CD4-positive, alpha-beta memory T cell (primary cell): ENCODE measurements at regions of chr11 and their contacts with region 1.

Region 1: GRCh38 chr11:12224537-12224893 is 114.1 kb downstream of the MICAL2 start:
- DNase-seq: peak; percentile 88 to 94 (median 90)
- H3K4me3 ChIP-seq: peak overlapping the region; percentile 30 to 48
- H3K4me3 Mint-ChIP-seq: peak overlapping the region; percentile 73 to 87 (median 78)
- H3K27ac ChIP-seq: peak overlapping the region; percentile 60
- H3K27ac Mint-ChIP-seq: peak overlapping the region; percentile 93 to 99 (median 97)
- H3K4me1 ChIP-seq: peaks cover 49% of the 10 kb centered on the region
- H3K4me1 Mint-ChIP-seq: peaks cover 41 to 64% (median 52%) of the 10 kb centered on the region in 4 donors
- H3K27me3 ChIP-seq: no peaks in the 10 kb centered on the region
- H3K27me3 Mint-ChIP-seq: no peaks in the 10 kb centered on the region

Region 2: GRCh38 chr11:12043959-12044819 is 180.3 kb before region 1 on chr11:
- CTCF ChIA-PET with region 1: interaction called, 11 read pairs
- POLR2A ChIA-PET with region 1: interaction called, 6 read pairs
- intact Hi-C with region 1: no loop called
- DNase-seq: peak in 4 of 5 donors; percentile 49 to 60 (median 50)
- H3K4me3 ChIP-seq: no peak overlapping the region
- H3K4me3 Mint-ChIP-seq: no peak overlapping the region
- H3K27ac ChIP-seq: no peak overlapping the region
- H3K27ac Mint-ChIP-seq: no peak overlapping the region
- H3K4me1 ChIP-seq: no peaks in the 10 kb centered on the region
- H3K4me1 Mint-ChIP-seq: peaks cover 2 to 5% (median 3%) of the 10 kb centered on the region in 4 donors
- H3K27me3 ChIP-seq: no peaks in the 10 kb centered on the region
- H3K27me3 Mint-ChIP-seq: no peaks in the 10 kb centered on the region

Region 3: DNA sequence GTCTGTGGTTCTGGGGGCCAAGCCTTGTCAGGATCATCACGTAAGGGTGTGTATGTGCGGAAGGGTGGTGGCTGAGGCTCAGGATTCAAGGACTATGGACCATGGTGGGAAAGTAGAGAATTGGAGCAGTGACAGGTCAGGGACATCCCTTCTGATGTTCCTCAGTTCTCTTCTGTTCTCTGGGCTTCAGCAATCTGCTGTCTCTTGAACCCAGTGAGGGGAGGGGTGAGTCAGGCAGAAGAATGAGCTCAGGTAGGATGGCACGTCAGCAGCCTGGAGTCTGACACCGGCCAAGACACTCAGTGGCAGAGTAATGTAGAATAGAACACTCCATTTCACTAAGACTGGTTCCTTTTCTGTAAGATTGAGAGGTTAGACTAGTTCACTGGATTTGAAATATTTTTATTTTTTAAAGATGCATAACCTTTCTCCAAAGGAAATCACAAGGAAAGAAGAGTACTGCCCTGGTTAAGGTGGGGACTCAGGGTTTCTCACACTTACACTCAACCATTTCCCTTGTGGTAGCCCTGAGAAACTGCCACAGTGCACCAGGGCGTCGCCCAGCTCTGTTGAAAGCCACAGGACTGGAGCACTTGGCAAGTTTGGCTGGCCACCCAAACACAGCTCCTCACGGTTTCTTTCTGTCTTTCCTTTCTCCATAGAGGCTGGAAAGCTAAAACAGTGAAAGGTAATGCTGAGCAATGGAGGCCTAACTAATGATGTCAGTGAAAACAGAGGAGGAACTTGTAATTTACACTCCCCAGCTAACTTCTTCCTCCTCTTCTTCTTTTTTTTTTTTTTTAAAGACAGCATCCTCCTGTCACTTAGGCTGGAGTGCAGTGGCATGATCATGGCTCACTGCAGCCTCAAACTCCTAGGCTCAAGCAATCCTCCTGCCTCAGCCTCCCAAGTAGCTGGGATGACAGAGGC is 137.2 kb before region 1 on chr11:
- CTCF ChIA-PET with region 1: interaction called, 17 read pairs
- POLR2A ChIA-PET with region 1: interaction called, 14 read pairs
- intact Hi-C with region 1: no loop called
- DNase-seq: peak; percentile 39 to 63 (median 52)
- H3K4me3 ChIP-seq: peak overlapping the region; percentile 6 to 26
- H3K4me3 Mint-ChIP-seq: peak overlapping the region; percentile 53 to 81 (median 72)
- H3K27ac ChIP-seq: no peak overlapping the region
- H3K27ac Mint-ChIP-seq: peak overlapping the region; percentile 67 to 94 (median 90)
- H3K4me1 ChIP-seq: peaks cover 62% of the 10 kb centered on the region
- H3K4me1 Mint-ChIP-seq: peaks cover 59 to 83% (median 65%) of the 10 kb centered on the region in 4 donors
- H3K27me3 ChIP-seq: no peaks in the 10 kb centered on the region
- H3K27me3 Mint-ChIP-seq: no peaks in the 10 kb centered on the region

Region 4: GRCh38 chr11:12110201-12110713 is 114.3 kb before region 1 on chr11 and contains the start of gene MICAL2:
- CTCF ChIA-PET with region 1: interaction called, 3 read pairs
- POLR2A ChIA-PET with region 1: interaction called, 18 read pairs
- intact Hi-C with region 1: loop called (anchors 5 kb)
- DNase-seq: peak; percentile 82 to 86 (median 84)
- H3K4me3 ChIP-seq: peak within 1 kb of the TSS; percentile 60 to 61
- H3K4me3 Mint-ChIP-seq: peak within 1 kb of the TSS; percentile 82 to 90 (median 85)
- H3K27ac ChIP-seq: peak within 1 kb of the TSS; percentile 32
- H3K27ac Mint-ChIP-seq: peak within 1 kb of the TSS; percentile 63 to 92 (median 82)
- H3K4me1 ChIP-seq: peaks cover 43% of the 10 kb centered on the region
- H3K4me1 Mint-ChIP-seq: peaks cover 17 to 34% (median 23%) of the 10 kb centered on the region in 4 donors
- H3K27me3 ChIP-seq: no peaks in the 10 kb centered on the region
- H3K27me3 Mint-ChIP-seq: no peaks in the 10 kb centered on the region
- total RNA-seq, gene MICAL2: 33.3 to 38.8 TPM

Region 5: GRCh38 chr11:12134236-12134585 is 90.3 kb before region 1 on chr11:
- CTCF ChIA-PET with region 1: interaction called, 6 read pairs
- POLR2A ChIA-PET with region 1: interaction called, 11 read pairs
- intact Hi-C with region 1: no loop called
- DNase-seq: no peak
- H3K4me3 ChIP-seq: no peak overlapping the region
- H3K4me3 Mint-ChIP-seq: peak overlapping the region; percentile 29 to 84 (median 52)
- H3K27ac ChIP-seq: no peak overlapping the region
- H3K27ac Mint-ChIP-seq: peak overlapping the region; percentile 67 to 84 (median 75)
- H3K4me1 ChIP-seq: peaks cover 13% of the 10 kb centered on the region
- H3K4me1 Mint-ChIP-seq: peaks cover 23 to 35% (median 28%) of the 10 kb centered on the region in 4 donors
- H3K27me3 ChIP-seq: no peaks in the 10 kb centered on the region
- H3K27me3 Mint-ChIP-seq: no peaks in the 10 kb centered on the region

Region 6: DNA sequence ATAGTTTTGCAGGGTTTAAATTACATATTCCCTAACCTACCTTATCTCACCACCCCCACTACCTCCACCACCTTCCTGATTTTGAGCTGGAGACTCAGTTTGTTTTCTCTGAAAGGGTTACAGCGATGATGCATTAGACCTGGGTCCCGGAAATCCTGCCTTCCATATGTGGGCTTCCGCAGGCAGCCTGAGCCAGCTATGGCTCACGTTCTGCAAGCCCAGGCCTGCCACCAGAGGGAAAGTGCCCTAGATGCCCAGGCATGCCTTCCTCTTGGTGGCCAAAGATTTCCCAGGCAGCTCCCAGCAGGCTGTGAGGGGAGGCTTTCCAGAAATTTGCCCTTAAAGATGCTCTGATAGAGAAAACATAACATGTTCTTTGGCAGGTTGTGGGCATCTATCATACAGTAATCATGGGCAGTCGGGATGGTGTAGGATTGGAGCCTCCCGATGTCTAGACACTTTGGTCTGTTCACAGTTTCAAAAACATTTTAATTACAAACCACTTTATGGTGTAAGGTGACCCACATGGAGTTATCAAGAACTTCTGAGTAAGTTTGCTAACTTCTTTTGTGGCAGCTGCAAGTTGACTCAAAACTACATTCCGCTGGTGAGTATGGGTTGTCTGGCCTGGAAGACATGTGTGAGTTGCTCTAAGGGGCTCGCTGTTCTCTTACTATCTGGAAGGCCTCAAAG is 34.8 kb before region 1 on chr11:
- CTCF ChIA-PET with region 1: interaction called, 28 read pairs
- POLR2A ChIA-PET with region 1: interaction called, 251 read pairs
- intact Hi-C with region 1: no loop called
- DNase-seq: peak; percentile 60 to 73 (median 66)
- H3K4me3 ChIP-seq: peak overlapping the region in 1 of 2 donors; percentile 15
- H3K4me3 Mint-ChIP-seq: peak overlapping the region; percentile 56 to 84 (median 74)
- H3K27ac ChIP-seq: peak overlapping the region; percentile 45
- H3K27ac Mint-ChIP-seq: peak overlapping the region; percentile 8 to 95 (median 87)
- H3K4me1 ChIP-seq: peaks cover 40% of the 10 kb centered on the region
- H3K4me1 Mint-ChIP-seq: peaks cover 21 to 60% (median 37%) of the 10 kb centered on the region in 4 donors
- H3K27me3 ChIP-seq: no peaks in the 10 kb centered on the region
- H3K27me3 Mint-ChIP-seq: no peaks in the 10 kb centered on the region

Region 7: DNA sequence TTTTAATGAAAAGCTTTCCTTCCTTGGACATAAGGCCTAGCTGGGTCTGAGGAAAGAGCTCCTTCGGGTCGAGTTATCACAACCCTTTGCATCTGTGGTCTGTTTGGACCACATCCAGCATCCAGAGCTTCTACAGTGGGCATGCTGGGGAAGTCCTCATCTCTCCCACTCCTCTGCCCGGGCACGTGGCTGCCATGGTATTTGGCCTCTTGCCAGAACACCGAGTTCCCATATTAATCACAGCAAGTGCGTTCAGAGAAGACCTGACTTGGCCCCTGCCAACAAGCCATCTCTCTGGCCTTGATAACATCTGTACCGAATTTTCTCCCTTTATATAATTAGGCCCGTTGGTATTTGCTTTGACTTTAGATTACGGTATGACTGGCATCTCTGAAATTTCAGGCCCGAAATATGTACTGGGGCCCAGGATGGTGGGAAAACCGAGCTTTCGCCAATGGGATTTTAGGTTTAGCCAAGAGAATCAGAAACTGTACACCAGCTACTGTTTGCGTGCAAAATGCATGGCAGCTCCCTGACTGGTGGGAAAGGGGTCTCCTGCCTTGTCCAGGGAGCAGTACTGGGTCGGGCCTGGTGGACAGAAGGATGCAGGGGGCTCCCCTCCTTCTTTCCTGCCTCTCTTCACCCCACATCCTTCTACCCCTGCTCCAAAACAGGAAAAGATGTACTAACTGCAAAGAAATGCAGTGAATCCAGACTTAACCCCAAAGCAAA is 24.1 kb before region 1 on chr11:
- CTCF ChIA-PET with region 1: interaction called, 32 read pairs
- POLR2A ChIA-PET with region 1: interaction called, 251 read pairs
- intact Hi-C with region 1: loop called (anchors 1 kb)
- DNase-seq: no peak
- H3K4me3 ChIP-seq: no peak overlapping the region
- H3K4me3 Mint-ChIP-seq: peak overlapping the region in 4 of 8 donors; percentile 9 to 93 (median 66)
- H3K27ac ChIP-seq: peak overlapping the region; percentile 52
- H3K27ac Mint-ChIP-seq: peak overlapping the region; percentile 87 to 98 (median 94)
- H3K4me1 ChIP-seq: peaks cover 59% of the 10 kb centered on the region
- H3K4me1 Mint-ChIP-seq: peaks cover 48 to 67% (median 57%) of the 10 kb centered on the region in 4 donors
- H3K27me3 ChIP-seq: no peaks in the 10 kb centered on the region
- H3K27me3 Mint-ChIP-seq: no peaks in the 10 kb centered on the region